AG04450 (cell line): ENCODE measurements at regions of chr11 and their contacts with region 1.

Region 1: DNA sequence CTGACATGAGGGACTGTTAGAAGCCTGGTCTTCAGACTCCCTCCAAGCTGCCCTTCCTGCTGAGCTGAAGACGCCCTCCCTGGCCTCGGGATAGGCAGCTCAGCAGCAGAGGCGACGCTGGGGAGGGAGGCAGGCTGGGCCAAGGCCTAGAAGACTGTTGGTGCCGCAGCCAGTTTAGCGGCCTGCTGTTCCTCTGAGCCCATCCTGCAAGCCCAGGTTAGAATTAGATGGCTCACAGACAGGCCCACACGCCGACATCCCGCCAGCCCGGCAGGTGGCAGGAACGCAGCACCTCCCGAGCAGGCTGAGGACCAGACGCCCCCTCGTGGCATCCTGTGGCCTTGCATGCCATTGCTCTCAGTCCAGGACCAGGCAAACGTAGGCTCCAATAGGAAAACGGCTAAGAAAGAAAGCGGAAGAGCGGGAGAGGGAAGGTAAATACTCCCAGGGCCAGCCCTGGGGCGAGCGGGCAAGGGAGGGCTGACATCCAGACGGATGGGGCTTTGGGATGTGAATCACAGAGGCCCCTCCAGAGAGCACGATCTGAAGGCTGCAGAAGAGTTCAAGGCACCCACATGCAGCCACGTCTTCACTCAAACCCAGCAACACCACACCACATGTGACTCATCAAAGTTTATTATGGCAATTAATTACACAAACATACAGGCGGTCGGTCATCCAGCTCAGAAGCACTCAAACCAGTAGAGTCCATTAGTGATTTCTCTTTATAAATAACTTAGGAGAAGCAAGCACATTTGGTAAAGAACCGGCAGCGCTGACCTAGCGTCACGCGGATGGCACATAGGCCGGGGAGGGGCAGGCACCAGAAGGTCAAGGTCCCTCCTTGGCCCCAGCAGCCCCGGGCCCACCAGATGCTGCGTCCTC is 27.6 kb downstream of the CD5 start:
- DNase-seq: peak; percentile 79
- H3K4me3 ChIP-seq: peak overlapping the region; percentile 40
- H3K27ac ChIP-seq: peak overlapping the region; percentile 85
- H3K27me3 ChIP-seq: peaks cover 9% of the 10 kb centered on the region
- CTCF ChIP-seq: peak; percentile 100

Region 2: GRCh38 chr11:61071208-61071681 is 58.6 kb before region 1 on chr11:
- CTCF ChIA-PET with region 1: no interaction called
- POLR2A ChIA-PET with region 1: no interaction called
- DNase-seq: no peak
- H3K4me3 ChIP-seq: no peak overlapping the region
- H3K27ac ChIP-seq: no peak overlapping the region
- H3K27me3 ChIP-seq: peaks cover 8% of the 10 kb centered on the region
- CTCF ChIP-seq: no peak

Region 3: GRCh38 chr11:61141601-61142028 is 11.7 kb after region 1 on chr11:
- CTCF ChIA-PET with region 1: interaction called, 37 read pairs
- POLR2A ChIA-PET with region 1: no interaction called
- DNase-seq: no peak
- H3K4me3 ChIP-seq: no peak overlapping the region
- H3K27ac ChIP-seq: no peak overlapping the region
- H3K27me3 ChIP-seq: no peaks in the 10 kb centered on the region
- CTCF ChIP-seq: no peak

Region 4: DNA sequence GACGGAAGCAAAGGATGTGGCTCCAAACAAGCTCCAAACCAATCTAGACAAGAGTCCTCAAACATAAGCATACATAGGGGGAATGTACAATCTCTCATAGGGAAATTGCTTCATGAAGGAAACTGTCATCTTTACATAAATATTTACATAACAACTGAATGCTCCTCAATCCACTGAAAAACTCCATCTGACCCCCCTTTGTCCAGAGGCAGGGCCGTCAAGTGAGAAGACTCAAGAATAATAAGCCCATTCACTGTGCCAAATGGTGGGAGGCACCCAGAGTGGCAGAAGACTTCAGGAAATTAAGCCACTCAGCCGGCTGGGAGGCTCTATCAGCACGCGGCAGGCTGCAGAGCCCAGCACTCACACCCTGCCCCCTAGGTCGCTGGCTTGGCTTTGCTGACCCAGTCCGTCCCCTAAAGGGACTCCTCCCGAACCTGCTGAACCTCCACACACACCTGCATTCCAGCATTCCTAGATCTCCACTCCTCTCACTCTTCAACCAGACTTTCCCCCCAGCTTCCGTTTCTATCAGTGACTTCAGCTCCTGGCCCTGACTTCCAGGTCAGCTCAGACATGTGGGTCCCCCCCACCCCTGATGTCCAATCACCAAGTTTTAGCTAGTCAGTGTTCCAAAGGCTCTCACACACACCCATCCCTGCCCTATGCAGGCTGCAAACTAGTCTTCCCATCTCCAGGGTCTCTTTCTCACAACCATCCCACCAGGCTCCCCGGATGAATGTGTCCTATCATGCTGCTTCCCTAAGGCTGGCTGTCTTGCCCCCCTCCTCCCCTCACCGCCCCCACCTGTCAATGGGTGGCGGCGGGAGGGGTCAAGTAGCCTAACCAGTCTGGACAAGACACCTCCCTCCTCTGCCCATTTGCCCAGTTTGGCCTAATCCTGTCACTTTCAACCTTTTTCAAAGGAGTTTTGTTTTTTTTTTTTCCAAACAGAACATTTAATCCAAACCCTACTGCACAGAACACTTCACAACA is 20.0 kb after region 1 on chr11:
- CTCF ChIA-PET with region 1: interaction called, 15 read pairs
- POLR2A ChIA-PET with region 1: no interaction called
- DNase-seq: peak; percentile 20
- H3K4me3 ChIP-seq: no peak overlapping the region
- H3K27ac ChIP-seq: no peak overlapping the region
- H3K27me3 ChIP-seq: no peaks in the 10 kb centered on the region
- CTCF ChIP-seq: no peak